Activated CD8-positive, alpha-beta T cell treated with anti-CD3 and anti-CD28 coated beads for 36 hours (primary cell): ENCODE measurements at regions of chr18 and their contacts with region 1.

Region 1: DNA sequence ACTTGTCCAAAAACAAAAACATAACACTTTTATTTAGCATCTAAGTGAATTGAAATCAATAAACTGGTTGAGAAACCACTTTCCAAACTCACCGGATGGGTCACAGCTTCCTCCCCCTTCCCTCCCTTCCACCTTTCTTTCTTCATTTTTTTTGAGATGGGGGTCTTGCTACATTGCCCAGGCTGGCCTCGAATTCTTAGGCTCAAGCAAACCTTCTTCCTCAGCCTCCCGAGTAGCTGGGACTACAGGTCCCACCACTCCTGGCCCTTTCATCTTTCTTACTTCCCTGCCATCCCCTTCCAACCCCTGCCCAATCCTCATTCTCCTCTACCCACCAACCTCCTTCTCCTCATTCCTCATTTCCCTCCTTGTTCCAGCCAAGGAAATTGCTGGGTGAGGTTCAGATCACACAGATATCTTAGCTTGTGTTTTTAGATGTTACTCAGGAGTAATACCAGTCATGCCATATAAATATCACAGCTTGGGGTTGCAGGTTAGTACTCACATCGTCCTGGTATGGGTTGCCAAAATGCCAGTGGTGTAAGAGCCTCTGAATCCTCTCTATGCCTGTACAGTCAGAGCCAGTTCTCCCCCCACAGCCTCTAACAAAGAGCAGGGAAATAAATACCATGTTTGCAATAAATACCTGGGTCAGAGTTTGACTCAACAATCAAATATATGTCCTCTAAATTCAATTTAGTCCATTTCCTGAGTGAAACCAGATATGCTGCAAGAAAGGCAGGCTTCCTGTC is 132.7 kb upstream of the NDUFV2 start:
- DNase-seq: no peak
- ATAC-seq: no peak
- H3K4me3 Mint-ChIP-seq: no peak overlapping the region
- H3K27ac Mint-ChIP-seq: no peak overlapping the region
- H3K4me1 Mint-ChIP-seq: no peaks in the 10 kb centered on the region
- H3K27me3 Mint-ChIP-seq: peaks cover 9% of the 10 kb centered on the region
- CTCF ChIP-seq: no peak

Region 2: GRCh38 chr18:8283891-8284585 is 685.8 kb before region 1 on chr18:
- CTCF ChIA-PET with region 1: no interaction called
- POLR2A ChIA-PET with region 1: no interaction called
- intact Hi-C with region 1: no loop called
- DNase-seq: no peak
- ATAC-seq: no peak
- H3K4me3 Mint-ChIP-seq: no peak overlapping the region
- H3K27ac Mint-ChIP-seq: no peak overlapping the region
- H3K4me1 Mint-ChIP-seq: no peaks in the 10 kb centered on the region
- H3K27me3 Mint-ChIP-seq: no peaks in the 10 kb centered on the region
- CTCF ChIP-seq: no peak

Region 3: DNA sequence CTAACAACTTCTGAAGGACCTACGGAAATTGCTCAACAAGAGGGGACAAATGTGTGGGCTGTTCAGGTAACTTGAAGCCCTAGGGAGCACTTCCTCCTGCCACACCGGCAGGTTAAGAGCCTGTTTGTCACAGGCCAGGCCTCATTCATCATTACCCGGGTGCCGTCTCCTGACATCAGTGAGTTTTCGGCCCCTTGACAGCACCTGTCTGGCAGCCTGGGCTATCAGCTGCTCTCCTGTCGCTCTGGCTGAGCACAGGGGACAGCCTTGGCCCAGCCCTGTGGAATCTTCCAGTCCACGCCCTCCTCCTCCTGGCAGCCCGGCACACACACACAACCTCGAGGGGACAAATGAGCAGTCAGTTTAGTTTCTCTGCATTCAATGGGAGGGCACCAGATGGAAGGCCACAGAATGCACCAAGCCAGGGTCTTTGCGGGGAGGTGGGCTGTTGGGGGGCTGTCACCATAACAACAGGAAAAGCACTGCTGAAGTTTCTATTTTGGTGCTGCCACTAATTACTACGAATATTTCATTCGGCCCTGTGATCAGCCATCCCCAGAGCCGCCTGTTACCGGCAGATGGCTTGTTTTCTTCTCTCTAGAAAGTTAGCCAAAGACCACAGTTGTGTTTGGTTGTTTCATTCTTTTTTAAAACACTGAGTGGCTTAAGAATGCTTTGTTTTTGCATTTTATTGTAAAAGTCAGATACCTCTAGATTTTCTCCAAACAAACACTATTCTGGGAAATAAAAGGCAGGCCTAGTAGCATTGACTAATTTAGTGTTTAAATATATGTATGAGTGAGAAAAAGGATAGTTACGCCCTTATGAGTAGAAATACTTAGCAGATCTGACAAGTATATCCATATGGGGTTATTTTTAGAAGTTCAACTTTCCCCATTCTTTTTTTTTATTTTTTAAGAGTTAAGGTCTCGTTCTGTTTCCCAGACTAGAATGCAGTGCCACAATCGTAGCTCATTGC is 57.2 kb before region 1 on chr18:
- CTCF ChIA-PET with region 1: no interaction called
- POLR2A ChIA-PET with region 1: no interaction called
- intact Hi-C with region 1: loop called (anchors 10 kb)
- DNase-seq: no peak
- ATAC-seq: no peak
- H3K4me3 Mint-ChIP-seq: no peak overlapping the region
- H3K27ac Mint-ChIP-seq: no peak overlapping the region
- H3K4me1 Mint-ChIP-seq: peaks cover 6% of the 10 kb centered on the region
- H3K27me3 Mint-ChIP-seq: no peaks in the 10 kb centered on the region
- CTCF ChIP-seq: no peak

Region 4: GRCh38 chr18:9017170-9017904 is 47.5 kb after region 1 on chr18:
- CTCF ChIA-PET with region 1: no interaction called
- POLR2A ChIA-PET with region 1: no interaction called
- intact Hi-C with region 1: no loop called
- DNase-seq: peak; percentile 90
- ATAC-seq: peak; percentile 98
- H3K4me3 Mint-ChIP-seq: peak overlapping the region; percentile 65
- H3K27ac Mint-ChIP-seq: peak overlapping the region; percentile 81
- H3K4me1 Mint-ChIP-seq: peaks cover 13% of the 10 kb centered on the region
- H3K27me3 Mint-ChIP-seq: peaks cover 2% of the 10 kb centered on the region
- CTCF ChIP-seq: no peak